ENCODE measurements at regions of chr2 and their contacts with region 1.

Region 1: DNA sequence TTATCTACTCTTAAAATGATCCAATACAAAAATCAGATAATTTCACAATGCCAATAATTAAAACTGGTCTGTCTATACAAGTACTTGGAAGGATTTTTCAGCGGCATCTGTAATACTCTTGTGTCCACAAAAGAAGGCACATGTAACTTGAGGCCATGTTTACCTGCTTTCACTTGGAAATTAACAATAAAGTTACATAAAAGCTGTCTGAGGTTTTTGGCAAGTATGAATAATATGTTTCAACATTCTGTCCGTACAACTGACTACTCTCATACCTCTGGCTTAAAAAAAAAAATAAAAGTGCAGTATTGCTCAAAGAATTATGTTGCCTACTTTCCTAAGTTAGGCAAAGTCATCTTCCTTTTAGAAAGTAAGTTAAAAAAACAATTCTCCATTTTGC is 253.6 kb downstream of the NBAS start:
- DNase-seq: no peak
- ATAC-seq: no peak
- H3K4me3 ChIP-seq: no peak overlapping the region
- H3K27ac ChIP-seq: no peak overlapping the region
- H3K4me1 ChIP-seq: no peaks in the 10 kb centered on the region
- H3K27me3 ChIP-seq: no peaks in the 10 kb centered on the region
- CTCF ChIP-seq: no peak
- POLR2A ChIP-seq: no peak
- RAD21 ChIP-seq: no peak

Region 2: DNA sequence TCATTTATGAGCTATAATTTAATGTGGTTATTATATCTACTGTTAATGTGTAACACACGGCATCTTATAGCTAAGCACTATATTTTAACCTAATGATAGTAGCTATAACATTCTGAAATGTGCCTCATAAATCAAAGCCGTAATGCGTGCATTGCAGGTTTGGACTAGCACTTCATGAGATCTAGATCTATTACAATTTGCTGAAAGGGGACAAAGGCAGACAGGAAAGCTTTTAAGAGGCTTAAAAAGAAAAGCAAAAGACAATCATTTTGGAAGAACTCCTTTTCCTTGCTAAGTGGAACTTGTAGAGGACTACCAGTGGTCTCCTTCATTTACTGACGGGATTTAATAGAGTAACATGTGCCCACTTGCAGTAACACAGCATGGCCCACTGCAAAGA is 40.5 kb after region 1 on chr2:
- CTCF ChIA-PET with region 1: no interaction called
- POLR2A ChIA-PET with region 1: no interaction called
- dilution Hi-C with region 1: no loop called
- in situ Hi-C with region 1: no loop called
- intact Hi-C with region 1: loop called (anchors 5 kb)
- DNase-seq: no peak
- ATAC-seq: no peak
- H3K4me3 ChIP-seq: no peak overlapping the region
- H3K27ac ChIP-seq: no peak overlapping the region
- H3K4me1 ChIP-seq: no peaks in the 10 kb centered on the region
- H3K27me3 ChIP-seq: no peaks in the 10 kb centered on the region
- CTCF ChIP-seq: no peak
- POLR2A ChIP-seq: no peak
- RAD21 ChIP-seq: no peak